Dorsolateral prefrontal cortex (tissue), 120 donors: ENCODE measurements at regions of chr9 and their contacts with region 1.

Region 1: DNA sequence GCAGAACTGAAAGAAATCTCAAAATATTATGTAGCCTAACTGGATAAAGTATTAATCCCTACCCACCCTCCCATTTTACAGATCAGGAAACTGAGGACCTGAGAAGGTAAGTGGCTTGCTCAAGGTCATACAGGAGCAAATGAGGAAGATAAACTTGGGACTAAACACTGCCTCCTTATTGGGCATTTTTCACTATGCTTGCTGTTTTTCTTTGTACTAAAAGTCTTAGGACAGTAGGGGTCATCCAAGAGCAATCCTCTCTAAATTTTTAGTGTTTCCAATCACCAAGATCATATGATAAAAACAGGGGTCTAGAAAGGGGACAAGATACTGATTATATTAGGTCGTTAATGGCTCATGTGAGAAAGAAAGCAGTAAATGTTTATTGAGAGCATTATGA is 80.8 kb downstream of the RORB start:
- DNase-seq: no peak
- H3K4me3 ChIP-seq: no peak overlapping the region
- H3K27ac ChIP-seq: no peak overlapping the region
- H3K27me3 ChIP-seq: no peaks in the 10 kb centered on the region
- CTCF ChIP-seq: peak in 42 of 56 donors; percentile 12 to 67 (median 40)

Region 2: GRCh38 chr9:74742792-74743730 is 165.1 kb after region 1 on chr9:
- intact Hi-C with region 1: loop called in 1 of 2 experiments (anchors 5 kb)
- DNase-seq: peak in 6 of 10 donors; percentile 44 to 54 (median 50)
- H3K4me3 ChIP-seq: peak overlapping the region in 12 of 59 donors; percentile 2 to 35 (median 8)
- H3K27ac ChIP-seq: peak overlapping the region in 18 of 59 donors; percentile 2 to 58 (median 20)
- H3K27me3 ChIP-seq: no peaks in the 10 kb centered on the region
- CTCF ChIP-seq: peak; percentile 62 to 85 (median 78)